ENCODE measurements at regions of chr2 and their contacts with region 1.

Region 1: DNA sequence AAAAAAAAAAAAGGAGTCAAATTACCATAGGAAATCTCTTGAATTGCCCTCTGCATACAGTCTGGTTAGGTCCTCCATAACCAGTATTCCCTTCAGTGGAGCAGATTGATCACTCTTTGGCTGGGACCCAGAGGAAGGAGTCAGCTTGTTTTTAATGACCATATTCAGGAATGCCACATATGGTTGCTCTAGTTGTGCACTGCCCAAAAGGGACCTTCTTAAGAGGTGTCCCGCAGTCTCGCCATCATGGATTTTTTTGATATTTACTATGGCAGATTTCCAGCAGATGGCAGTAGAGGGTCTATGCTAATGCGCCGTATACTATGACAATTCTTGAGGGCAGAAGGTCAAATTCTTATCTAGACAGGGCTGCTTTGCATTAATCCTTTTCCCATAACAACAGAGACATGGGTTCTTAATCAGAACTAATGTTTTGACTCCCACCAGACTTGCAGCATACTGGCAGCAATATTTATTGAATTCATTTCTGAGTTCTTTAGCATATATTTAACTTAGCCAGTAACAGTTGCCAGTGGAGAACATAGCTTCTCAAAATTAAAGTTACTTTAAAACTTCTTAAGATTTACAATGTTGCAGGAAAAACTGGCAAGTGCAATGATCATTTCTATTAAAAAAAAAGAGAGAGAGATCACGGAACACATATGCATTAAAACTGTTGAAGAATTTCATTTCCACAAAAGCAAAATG is 31.8 kb upstream of the INPP4A start:
- DNase-seq: peak; percentile 20 to 67 (median 54)
- H3K4me3 ChIP-seq: no peak overlapping the region
- H3K27ac ChIP-seq: no peak overlapping the region
- H3K4me1 ChIP-seq: peaks cover 4 to 6% of the 10 kb centered on the region in 2 donors
- H3K27me3 ChIP-seq: no peaks in the 10 kb centered on the region
- CTCF ChIP-seq: peak; percentile 61 to 83 (median 78)
- POLR2A ChIP-seq: no peak

Region 2: GRCh38 chr2:98568881-98569793 is 156.2 kb after region 1 on chr2:
- intact Hi-C with region 1: loop called in 1 of 2 experiments (anchors 10 kb)
- DNase-seq: peak in 6 of 7 donors; percentile 30 to 65 (median 49)
- H3K4me3 ChIP-seq: no peak overlapping the region
- H3K27ac ChIP-seq: no peak overlapping the region
- H3K4me1 ChIP-seq: peaks cover 7 to 9% of the 10 kb centered on the region in 2 donors
- H3K27me3 ChIP-seq: no peaks in the 10 kb centered on the region
- CTCF ChIP-seq: peak; percentile 45 to 75 (median 64)
- POLR2A ChIP-seq: no peak

Region 3: DNA sequence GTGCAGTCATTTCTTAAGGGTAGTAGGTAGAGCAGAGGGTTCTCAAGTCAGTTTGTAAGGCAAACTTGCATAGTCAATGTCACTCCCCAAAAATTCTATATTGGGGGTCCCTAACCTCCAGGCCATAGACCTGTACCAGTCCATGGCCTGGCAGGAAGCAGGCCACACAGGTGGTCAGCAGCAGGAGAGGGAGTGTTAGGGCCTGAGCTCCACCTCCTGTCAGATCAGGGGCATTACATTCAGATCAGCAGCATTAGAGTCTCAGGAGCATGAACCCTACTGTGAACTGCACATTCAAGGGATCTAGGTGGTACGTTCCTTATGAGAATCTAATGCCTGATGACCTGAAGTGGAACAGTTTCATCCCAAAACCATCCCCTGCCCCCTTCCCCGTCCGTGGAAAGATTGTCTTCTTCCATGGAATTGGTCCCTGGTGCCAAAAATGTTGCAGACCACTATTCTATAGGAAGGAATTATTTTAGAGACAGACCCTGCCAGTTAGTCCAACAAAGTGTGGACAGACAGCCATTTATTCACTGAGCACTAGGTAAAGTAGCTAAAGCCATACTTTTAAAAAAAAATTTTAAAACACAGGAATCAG is 188.7 kb after region 1 on chr2:
- intact Hi-C with region 1: loop called (anchors 5 to 10 kb)
- DNase-seq: peak in 3 of 7 donors; percentile 30 to 48 (median 41)
- H3K4me3 ChIP-seq: no peak overlapping the region
- H3K27ac ChIP-seq: no peak overlapping the region
- H3K4me1 ChIP-seq: peaks cover 2 to 20% of the 10 kb centered on the region in 2 donors
- H3K27me3 ChIP-seq: no peaks in the 10 kb centered on the region
- CTCF ChIP-seq: peak; percentile 38 to 64 (median 58)
- POLR2A ChIP-seq: no peak

Region 4: DNA sequence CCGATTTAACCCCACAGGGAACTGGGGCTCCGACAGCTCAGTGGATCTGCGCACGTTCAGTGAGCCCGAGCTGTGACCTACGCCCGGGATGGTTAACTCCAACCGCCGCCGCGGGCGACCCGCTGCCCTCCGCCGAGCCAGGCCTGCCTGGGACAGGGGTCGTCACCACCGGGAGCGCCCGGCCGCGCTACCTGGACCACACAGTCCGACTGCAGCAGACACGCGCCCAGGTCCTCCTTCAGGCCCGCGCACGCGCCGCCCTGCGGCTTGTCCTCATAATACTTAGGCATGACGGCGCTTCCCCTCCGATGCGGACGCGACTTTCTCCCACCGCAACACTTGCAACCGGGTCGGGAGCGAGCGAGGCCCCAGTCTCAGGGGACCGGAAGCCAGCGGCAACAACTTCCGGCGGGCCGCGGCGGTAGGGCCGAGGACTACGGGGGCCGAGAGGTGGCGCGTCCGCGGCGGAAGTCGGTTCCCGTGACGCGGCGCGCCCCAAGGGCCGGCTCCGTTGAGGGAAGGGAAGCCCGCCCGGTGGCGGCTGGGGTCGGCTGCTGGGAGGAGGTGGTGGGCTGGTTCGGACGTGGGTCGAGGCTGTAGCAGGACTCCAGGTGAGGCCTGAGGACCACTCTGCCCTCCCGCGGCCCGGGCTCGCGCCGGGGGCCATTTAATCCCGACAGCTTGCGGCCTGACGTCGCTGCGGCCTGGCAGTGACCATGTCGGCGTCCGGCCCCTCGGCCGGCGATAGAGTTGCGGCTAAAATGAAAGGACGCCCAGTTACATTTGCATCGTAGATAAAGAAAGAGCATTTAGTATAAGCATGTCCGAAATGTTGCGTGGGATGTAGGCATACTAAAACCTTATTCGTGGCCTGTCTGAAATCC is 195.5 kb after region 1 on chr2 and contains the starts of genes COA5 and UNC50:
- intact Hi-C with region 1: loop called (anchors 5 to 10 kb)
- DNase-seq: peak; percentile 87 to 92 (median 90)
- H3K4me3 ChIP-seq: peak within 1 kb of the TSS; percentile 79 to 97 (median 86)
- H3K27ac ChIP-seq: peak within 1 kb of the TSS; percentile 69 to 98 (median 97)
- H3K4me1 ChIP-seq: peaks cover 24 to 59% of the 10 kb centered on the region in 2 donors
- H3K27me3 ChIP-seq: no peaks in the 10 kb centered on the region
- CTCF ChIP-seq: peak in 1 of 6 experiments; percentile 0
- POLR2A ChIP-seq: peak; percentile 74 to 83
- total RNA-seq, gene COA5: 18.9 to 70.0 (median 40.4) TPM
- total RNA-seq, gene UNC50: 48.6 to 72.4 (median 55.2) TPM

Region 5: DNA sequence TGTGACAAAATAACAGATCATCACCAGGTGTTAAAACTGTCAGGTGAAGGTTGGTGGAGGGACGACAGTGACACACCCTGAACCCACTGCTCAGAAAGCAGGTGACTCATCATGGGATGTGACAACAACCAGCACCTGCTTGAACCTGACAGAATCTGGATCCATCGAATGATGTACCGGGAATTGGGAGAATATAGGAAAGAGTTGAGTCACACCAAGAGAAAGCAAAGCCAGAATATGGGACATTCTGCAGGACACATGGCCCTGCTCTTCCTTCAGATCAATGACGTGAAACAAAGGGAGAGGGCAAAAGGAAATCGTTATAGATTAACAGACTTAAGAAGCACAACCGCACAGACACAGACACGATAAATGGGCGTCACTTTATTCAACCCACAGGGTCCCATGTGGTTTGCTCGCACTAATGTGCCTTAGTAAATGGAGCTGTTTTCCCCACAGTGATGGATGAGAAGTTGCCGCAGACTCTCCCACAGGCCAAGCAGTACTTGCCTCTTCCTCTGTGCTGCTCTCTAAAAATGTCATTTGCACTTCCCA is 423.0 kb after region 1 on chr2:
- intact Hi-C with region 1: loop called (anchors 10 kb)
- DNase-seq: no peak
- H3K4me3 ChIP-seq: no peak overlapping the region
- H3K27ac ChIP-seq: no peak overlapping the region
- H3K4me1 ChIP-seq: no peaks in the 10 kb centered on the region
- H3K27me3 ChIP-seq: no peaks in the 10 kb centered on the region
- CTCF ChIP-seq: no peak
- POLR2A ChIP-seq: no peak

Measured in adrenal gland (tissue), 19 donors.